ENCODE measurements at regions of chr12 and their contacts with region 1.

Region 1: GRCh38 chr12:84874825-84875139 is 37.8 kb downstream of the SLC6A15 start:
- DNase-seq: no peak
- ATAC-seq: no peak
- H3K4me3 ChIP-seq: no peak overlapping the region
- H3K27ac ChIP-seq: no peak overlapping the region
- H3K4me1 ChIP-seq: no peaks in the 10 kb centered on the region
- H3K27me3 ChIP-seq: no peaks in the 10 kb centered on the region
- CTCF ChIP-seq: no peak
- POLR2A ChIP-seq: no peak

Region 2: DNA sequence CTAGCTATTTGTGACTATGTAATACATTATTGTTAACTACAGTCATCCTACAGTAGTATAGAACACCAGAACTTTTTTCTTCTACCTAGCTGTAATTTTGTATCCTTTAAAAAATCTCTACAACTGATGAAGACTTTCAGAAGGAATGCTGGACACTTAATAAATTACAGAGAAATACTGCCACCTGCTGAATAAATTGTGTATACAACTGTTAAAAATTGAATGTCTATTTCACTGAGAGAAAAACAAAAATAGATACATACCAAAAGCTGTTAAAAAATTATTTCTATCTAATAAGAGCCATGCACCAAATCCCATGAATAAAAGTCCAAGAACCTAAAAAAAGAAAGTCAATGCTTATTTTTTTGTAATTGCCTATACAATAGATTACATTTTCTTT is 154.7 kb after region 1 on chr12:
- intact Hi-C with region 1: loop called (anchors 5 kb)
- DNase-seq: no peak
- ATAC-seq: no peak
- H3K4me3 ChIP-seq: no peak overlapping the region
- H3K27ac ChIP-seq: no peak overlapping the region
- H3K4me1 ChIP-seq: no peaks in the 10 kb centered on the region
- H3K27me3 ChIP-seq: no peaks in the 10 kb centered on the region
- CTCF ChIP-seq: peak; percentile 20 to 77 (median 68)
- POLR2A ChIP-seq: no peak